CD14-positive monocyte (primary cell): ENCODE measurements at regions of chr15 and their contacts with region 1.

Region 1: DNA sequence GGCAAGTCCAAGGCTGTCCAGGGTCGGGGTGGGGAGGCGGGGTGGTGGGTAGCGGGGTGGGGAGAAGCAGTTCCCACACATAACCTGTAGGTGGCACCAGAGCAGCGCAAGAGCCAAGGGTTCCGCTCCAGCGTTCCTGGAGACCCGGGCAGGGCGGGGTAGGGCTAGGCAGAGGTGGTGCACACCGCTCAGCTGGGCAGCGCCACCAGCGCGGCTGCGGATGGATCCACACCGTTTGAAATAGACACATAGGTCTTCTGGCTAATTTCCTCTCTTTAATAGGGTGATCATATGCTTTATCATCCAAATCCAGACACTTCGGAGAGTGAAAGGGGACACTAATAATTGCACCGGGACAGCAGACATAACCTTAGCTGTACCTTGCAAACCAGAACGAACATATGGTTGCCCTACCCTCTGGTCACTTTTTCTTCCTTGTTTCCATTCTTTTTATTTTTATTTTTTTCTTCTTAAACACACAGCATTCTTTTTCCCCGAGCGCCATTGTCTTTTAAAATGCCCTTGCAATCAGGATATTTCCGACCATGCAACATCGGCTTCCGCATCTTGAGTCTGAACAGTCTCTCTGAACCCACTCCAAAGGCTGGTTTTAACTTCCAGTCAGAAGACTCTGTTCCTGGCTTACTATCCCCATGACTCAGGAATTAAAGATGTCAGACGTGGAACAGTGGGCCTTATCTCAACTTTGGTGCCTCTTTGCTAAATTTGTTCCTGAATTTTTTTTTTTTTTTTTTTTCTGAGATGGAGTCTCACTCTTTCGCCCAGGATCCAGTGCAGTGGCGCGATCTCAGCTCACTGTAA is 12.5 kb upstream of the ZSCAN2 start:
- DNase-seq: peak; percentile 79 to 84 (median 81)
- H3K4me3 ChIP-seq: peak overlapping the region in 2 of 3 experiments; percentile 23 to 66
- H3K4me3 Mint-ChIP-seq: peak overlapping the region; percentile 77 to 92
- H3K27ac ChIP-seq: no peak overlapping the region
- H3K27ac Mint-ChIP-seq: peak overlapping the region in 1 of 7 donors; percentile 41
- H3K4me1 ChIP-seq: peaks cover 6 to 8% of the 10 kb centered on the region in 2 donors
- H3K4me1 Mint-ChIP-seq: peaks cover 6% of the 10 kb centered on the region
- H3K27me3 ChIP-seq: no peaks in the 10 kb centered on the region
- H3K27me3 Mint-ChIP-seq: peaks cover 0 to 3% (median 2%) of the 10 kb centered on the region in 3 donors
- CTCF ChIP-seq: peak; percentile 82

Region 2: GRCh38 chr15:84112025-84112424 is 476.2 kb before region 1 on chr15:
- intact Hi-C with region 1: no loop called
- DNase-seq: no peak
- H3K4me3 ChIP-seq: no peak overlapping the region
- H3K4me3 Mint-ChIP-seq: no peak overlapping the region
- H3K27ac ChIP-seq: no peak overlapping the region
- H3K27ac Mint-ChIP-seq: no peak overlapping the region
- H3K4me1 ChIP-seq: no peaks in the 10 kb centered on the region
- H3K4me1 Mint-ChIP-seq: peaks cover 5% of the 10 kb centered on the region
- H3K27me3 ChIP-seq: no peaks in the 10 kb centered on the region
- H3K27me3 Mint-ChIP-seq: peaks cover 0 to 2% (median 0%) of the 10 kb centered on the region in 3 donors
- CTCF ChIP-seq: no peak

Region 3: GRCh38 chr15:84734794-84735479 is 146.7 kb after region 1 on chr15:
- intact Hi-C with region 1: no loop called
- DNase-seq: peak; percentile 78 to 82 (median 78)
- H3K4me3 ChIP-seq: peak overlapping the region; percentile 20 to 71 (median 32)
- H3K4me3 Mint-ChIP-seq: peak overlapping the region; percentile 79 to 93
- H3K27ac ChIP-seq: peak overlapping the region; percentile 85 to 99
- H3K27ac Mint-ChIP-seq: peak overlapping the region; percentile 97 to 99 (median 98)
- H3K4me1 ChIP-seq: peaks cover 58 to 72% of the 10 kb centered on the region in 2 donors
- H3K4me1 Mint-ChIP-seq: peaks cover 61% of the 10 kb centered on the region
- H3K27me3 ChIP-seq: no peaks in the 10 kb centered on the region
- H3K27me3 Mint-ChIP-seq: no peaks in the 10 kb centered on the region
- CTCF ChIP-seq: no peak

Region 4: GRCh38 chr15:84748274-84749110 is 160.2 kb after region 1 on chr15 and contains the start of gene ZNF592:
- intact Hi-C with region 1: loop called in 1 of 2 experiments (anchors 2 kb)
- DNase-seq: peak; percentile 59 to 67 (median 63)
- H3K4me3 ChIP-seq: peak within 1 kb of the TSS; percentile 72 to 100 (median 96)
- H3K4me3 Mint-ChIP-seq: peak within 1 kb of the TSS; percentile 97 to 99
- H3K27ac ChIP-seq: peak within 1 kb of the TSS; percentile 95 to 97
- H3K27ac Mint-ChIP-seq: peak within 1 kb of the TSS; percentile 98 to 100 (median 99)
- H3K4me1 ChIP-seq: peaks cover 47 to 59% of the 10 kb centered on the region in 2 donors
- H3K4me1 Mint-ChIP-seq: peaks cover 66% of the 10 kb centered on the region
- H3K27me3 ChIP-seq: no peaks in the 10 kb centered on the region
- H3K27me3 Mint-ChIP-seq: no peaks in the 10 kb centered on the region
- CTCF ChIP-seq: peak; percentile 7
- polyA plus RNA-seq, gene ZNF592: 2.8 to 43.6 (median 5.0) TPM

Region 5: DNA sequence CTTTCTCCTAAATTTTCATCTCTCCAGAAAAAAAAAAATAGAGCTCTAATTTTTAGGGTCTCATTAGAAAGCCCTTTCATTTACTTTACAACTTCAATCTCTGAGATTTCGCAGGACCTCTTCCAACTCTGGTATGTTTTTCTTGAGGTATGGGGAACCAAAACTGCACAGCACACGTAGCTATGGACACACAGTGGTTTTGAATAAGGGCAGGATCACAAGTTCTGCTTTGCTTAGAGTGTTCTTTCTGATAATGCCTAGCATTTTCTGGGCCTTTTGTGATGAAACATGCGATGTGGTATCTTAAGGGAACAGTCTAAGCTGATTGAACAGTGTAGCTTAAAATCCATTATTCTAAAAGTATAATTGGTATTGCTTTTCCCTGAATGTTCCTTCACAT is 185.5 kb after region 1 on chr15:
- intact Hi-C with region 1: loop called in 1 of 2 experiments (anchors 5 kb)
- DNase-seq: peak; percentile 33 to 38 (median 38)
- H3K4me3 ChIP-seq: no peak overlapping the region
- H3K4me3 Mint-ChIP-seq: no peak overlapping the region
- H3K27ac ChIP-seq: peak overlapping the region in 1 of 2 donors; percentile 61
- H3K27ac Mint-ChIP-seq: peak overlapping the region; percentile 75 to 89 (median 87)
- H3K4me1 ChIP-seq: peaks cover 38 to 40% of the 10 kb centered on the region in 2 donors
- H3K4me1 Mint-ChIP-seq: peaks cover 48% of the 10 kb centered on the region
- H3K27me3 ChIP-seq: no peaks in the 10 kb centered on the region
- H3K27me3 Mint-ChIP-seq: peaks cover 0 to 2% (median 0%) of the 10 kb centered on the region in 3 donors
- CTCF ChIP-seq: no peak

Region 6: GRCh38 chr15:84874981-84875699 is 286.9 kb after region 1 on chr15:
- intact Hi-C with region 1: loop called (anchors 2 to 5 kb)
- DNase-seq: no peak
- H3K4me3 ChIP-seq: no peak overlapping the region
- H3K4me3 Mint-ChIP-seq: no peak overlapping the region
- H3K27ac ChIP-seq: no peak overlapping the region
- H3K27ac Mint-ChIP-seq: no peak overlapping the region
- H3K4me1 ChIP-seq: peaks cover under 1% of the 10 kb centered on the region in 2 donors
- H3K4me1 Mint-ChIP-seq: peaks cover 7% of the 10 kb centered on the region
- H3K27me3 ChIP-seq: no peaks in the 10 kb centered on the region
- H3K27me3 Mint-ChIP-seq: peaks cover 1% of the 10 kb centered on the region in 3 donors
- CTCF ChIP-seq: no peak

Region 7: GRCh38 chr15:84929744-84930371 is 341.6 kb after region 1 on chr15:
- intact Hi-C with region 1: loop called in 1 of 2 experiments (anchors 5 kb)
- DNase-seq: no peak
- H3K4me3 ChIP-seq: no peak overlapping the region
- H3K4me3 Mint-ChIP-seq: no peak overlapping the region
- H3K27ac ChIP-seq: no peak overlapping the region
- H3K27ac Mint-ChIP-seq: no peak overlapping the region
- H3K4me1 ChIP-seq: peaks cover 0 to 11% of the 10 kb centered on the region in 2 donors
- H3K4me1 Mint-ChIP-seq: peaks cover 7% of the 10 kb centered on the region
- H3K27me3 ChIP-seq: no peaks in the 10 kb centered on the region
- H3K27me3 Mint-ChIP-seq: peaks cover 0 to 2% (median 0%) of the 10 kb centered on the region in 3 donors
- CTCF ChIP-seq: no peak